ENCODE measurements at regions of chr16 and their contacts with region 1.

Region 1: DNA sequence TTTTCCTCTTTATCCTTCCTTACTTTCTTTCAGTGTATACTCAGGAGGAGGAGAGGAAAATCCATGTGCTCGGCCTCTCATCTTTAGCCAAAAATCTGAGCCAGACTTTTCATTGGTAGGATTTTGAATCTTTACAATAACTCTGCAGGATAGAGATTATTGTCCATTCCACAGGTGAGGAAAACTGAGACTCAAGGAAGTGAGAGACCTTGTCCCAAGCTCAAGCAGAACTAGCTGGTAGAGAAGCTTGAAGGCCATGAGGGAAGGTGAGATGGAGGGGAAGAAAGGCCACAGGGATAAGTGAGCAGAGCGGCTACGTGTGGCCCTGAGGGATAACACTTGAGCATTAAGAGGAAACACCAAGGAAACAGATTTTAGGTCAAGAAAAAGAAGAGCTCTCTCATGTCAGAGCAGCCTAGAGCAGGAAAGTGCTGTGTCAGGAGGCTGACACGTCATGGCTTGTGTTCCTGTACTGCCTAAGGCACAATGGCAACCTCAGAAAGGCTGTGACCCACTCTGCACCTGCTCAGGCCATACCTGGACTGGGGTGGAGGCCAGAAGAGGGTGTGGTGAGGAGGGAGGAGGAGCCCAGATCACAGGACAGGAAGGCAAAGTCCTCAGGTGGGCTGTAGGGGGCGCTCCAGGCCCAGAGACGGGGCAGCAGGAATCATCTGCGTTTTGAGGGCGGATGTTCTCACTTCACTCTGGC is 11.9 kb downstream of the MT4 start:
- DNase-seq: peak; percentile 96
- H3K4me3 Mint-ChIP-seq: no peak overlapping the region
- H3K27ac Mint-ChIP-seq: no peak overlapping the region
- H3K4me1 Mint-ChIP-seq: peaks cover 4% of the 10 kb centered on the region
- H3K27me3 Mint-ChIP-seq: peaks cover 16% of the 10 kb centered on the region

Region 2: GRCh38 chr16:56281256-56281805 is 295.4 kb before region 1 on chr16:
- intact Hi-C with region 1: no loop called
- DNase-seq: no peak
- H3K4me3 Mint-ChIP-seq: no peak overlapping the region
- H3K27ac Mint-ChIP-seq: no peak overlapping the region
- H3K4me1 Mint-ChIP-seq: peaks cover 26% of the 10 kb centered on the region
- H3K27me3 Mint-ChIP-seq: peaks cover 5% of the 10 kb centered on the region

Region 3: GRCh38 chr16:56600398-56600999 is 23.8 kb after region 1 on chr16:
- intact Hi-C with region 1: loop called (anchors 1 kb)
- DNase-seq: peak; percentile 80
- H3K4me3 Mint-ChIP-seq: no peak overlapping the region
- H3K27ac Mint-ChIP-seq: no peak overlapping the region
- H3K4me1 Mint-ChIP-seq: peaks cover 17% of the 10 kb centered on the region
- H3K27me3 Mint-ChIP-seq: peaks cover 34% of the 10 kb centered on the region

Region 4: DNA sequence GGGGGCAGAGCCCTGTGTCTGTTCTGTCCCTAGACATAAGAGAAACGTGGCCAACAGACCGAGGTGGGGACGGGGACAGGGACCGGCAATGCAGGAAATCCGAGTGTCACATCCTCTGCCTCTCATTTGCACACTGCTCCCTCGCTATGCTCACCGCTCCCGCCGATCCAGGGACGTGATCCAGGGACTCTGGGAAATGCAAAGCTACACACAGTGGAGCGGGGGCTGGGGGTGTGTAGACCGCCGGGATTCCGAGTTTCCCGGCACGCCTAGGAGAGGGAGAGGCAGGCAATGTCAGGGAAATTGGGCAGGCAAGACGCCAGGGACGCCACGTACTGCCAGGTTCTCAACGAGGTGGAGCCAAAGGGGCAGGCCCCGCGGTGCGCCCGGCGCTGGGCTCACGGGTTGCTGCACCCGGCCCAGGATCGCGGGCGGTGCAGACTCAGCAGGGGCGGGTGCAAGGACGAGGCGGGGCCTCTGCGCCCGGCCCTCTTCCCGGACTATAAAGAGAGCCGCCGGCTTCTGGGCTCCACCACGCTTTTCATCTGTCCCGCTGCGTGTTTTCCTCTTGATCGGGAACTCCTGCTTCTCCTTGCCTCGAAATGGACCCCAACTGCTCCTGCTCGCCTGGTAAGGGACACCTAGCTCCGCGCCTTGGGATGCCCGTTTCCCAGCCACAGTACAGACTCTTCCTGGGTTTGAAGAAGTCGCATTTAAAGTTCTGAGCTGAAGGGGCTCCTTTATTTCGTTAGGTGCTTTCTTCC is 105.4 kb after region 1 on chr16 and contains the start of gene MT1X:
- intact Hi-C with region 1: loop called (anchors 1 kb)
- DNase-seq: peak; percentile 97
- H3K4me3 Mint-ChIP-seq: peak within 1 kb of the TSS; percentile 94
- H3K27ac Mint-ChIP-seq: peak within 1 kb of the TSS; percentile 93
- H3K4me1 Mint-ChIP-seq: peaks cover 21% of the 10 kb centered on the region
- H3K27me3 Mint-ChIP-seq: no peaks in the 10 kb centered on the region
- total RNA-seq, gene MT1X: 62.7 and 66.9 TPM in 2 replicates

Region 5: DNA sequence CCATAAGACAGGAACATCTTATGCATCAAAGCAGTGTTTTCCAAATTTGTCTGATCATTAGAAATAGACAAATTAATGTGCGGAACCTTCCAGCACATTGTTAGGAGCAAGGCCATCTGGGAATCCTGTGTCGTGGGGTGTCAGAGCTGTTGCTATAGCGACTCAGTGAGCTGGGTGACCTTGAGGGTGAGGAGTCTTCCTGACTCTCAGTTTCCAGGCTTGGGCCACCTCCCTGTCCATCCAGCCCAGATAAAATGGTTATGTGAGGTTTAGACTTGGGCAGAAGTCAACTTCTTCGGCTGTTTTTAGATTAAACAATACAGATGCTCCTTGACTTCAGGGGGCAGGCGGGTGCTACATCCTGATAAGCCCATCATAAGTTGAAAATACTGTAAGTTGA is 126.1 kb after region 1 on chr16:
- intact Hi-C with region 1: loop called (anchors 1 kb)
- DNase-seq: no peak
- H3K4me3 Mint-ChIP-seq: no peak overlapping the region
- H3K27ac Mint-ChIP-seq: no peak overlapping the region
- H3K4me1 Mint-ChIP-seq: peaks cover 14% of the 10 kb centered on the region
- H3K27me3 Mint-ChIP-seq: peaks cover 2% of the 10 kb centered on the region

Region 6: GRCh38 chr16:56789360-56789759 is 212.6 kb after region 1 on chr16:
- intact Hi-C with region 1: loop called (anchors 5 kb)
- DNase-seq: peak; percentile 83
- H3K4me3 Mint-ChIP-seq: no peak overlapping the region
- H3K27ac Mint-ChIP-seq: no peak overlapping the region
- H3K4me1 Mint-ChIP-seq: peaks cover 3% of the 10 kb centered on the region
- H3K27me3 Mint-ChIP-seq: no peaks in the 10 kb centered on the region

Region 7: GRCh38 chr16:56866943-56867830 is 290.4 kb after region 1 on chr16:
- intact Hi-C with region 1: loop called (anchors 10 kb)
- DNase-seq: peak; percentile 84
- H3K4me3 Mint-ChIP-seq: no peak overlapping the region
- H3K27ac Mint-ChIP-seq: no peak overlapping the region
- H3K4me1 Mint-ChIP-seq: peaks cover 19% of the 10 kb centered on the region
- H3K27me3 Mint-ChIP-seq: no peaks in the 10 kb centered on the region